Uterus (tissue), 4 donors: ENCODE measurements at regions of chr6 and their contacts with region 1.

Region 1: GRCh38 chr6:149834513-149835481 is 29.4 kb downstream of the LRP11 start:
- DNase-seq: peak; percentile 56 to 61
- H3K4me3 ChIP-seq: no peak overlapping the region
- H3K27ac ChIP-seq: no peak overlapping the region
- H3K4me1 ChIP-seq: no peaks in the 10 kb centered on the region
- H3K27me3 ChIP-seq: no peaks in the 10 kb centered on the region
- CTCF ChIP-seq: peak; percentile 85 to 95 (median 90)
- POLR2A ChIP-seq: no peak

Region 2: GRCh38 chr6:149701714-149702113 is 133.1 kb before region 1 on chr6:
- intact Hi-C with region 1: no loop called
- DNase-seq: no peak
- H3K4me3 ChIP-seq: no peak overlapping the region
- H3K27ac ChIP-seq: no peak overlapping the region
- H3K4me1 ChIP-seq: peaks cover 0 to 3% of the 10 kb centered on the region in 2 donors
- H3K27me3 ChIP-seq: no peaks in the 10 kb centered on the region
- CTCF ChIP-seq: no peak
- POLR2A ChIP-seq: no peak

Region 3: DNA sequence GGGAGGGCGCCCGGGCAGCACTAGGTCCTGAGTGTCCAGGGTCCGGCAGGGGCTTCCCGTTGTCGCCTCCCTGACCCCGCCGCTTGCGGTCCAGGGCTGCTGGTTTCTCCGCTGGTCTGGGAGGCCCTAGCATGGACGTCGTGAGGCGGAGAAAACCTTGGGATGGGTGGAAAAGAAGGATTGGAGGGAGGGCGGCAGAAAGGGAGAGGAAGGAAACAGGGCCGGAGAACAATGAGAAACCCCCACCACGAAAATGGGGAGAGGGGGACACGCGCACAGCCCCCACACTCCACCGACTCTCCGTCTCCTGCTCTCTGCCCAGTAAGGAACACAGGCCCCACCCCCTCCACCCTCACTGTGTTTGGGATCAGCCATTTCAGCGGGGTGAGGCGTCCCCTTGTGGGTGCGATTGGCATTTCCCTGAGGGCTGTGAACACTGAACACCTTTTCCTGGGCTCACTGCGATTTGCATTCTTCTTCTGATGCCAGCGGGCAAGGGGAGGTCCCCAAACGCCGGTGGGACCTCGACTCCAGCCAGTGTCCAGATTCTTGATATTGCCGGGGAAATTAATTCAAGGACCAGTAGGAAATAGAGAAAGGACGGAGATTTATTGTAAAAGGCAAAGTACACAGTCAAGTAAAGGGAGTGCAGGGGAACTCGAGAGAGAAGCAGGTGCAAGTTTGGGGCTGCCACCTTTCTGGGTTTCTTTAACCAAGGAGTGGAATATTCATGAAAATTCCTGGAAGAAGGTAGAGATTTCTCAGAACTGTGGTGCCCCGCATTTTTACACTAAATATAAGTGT is 91.4 kb after region 1 on chr6:
- intact Hi-C with region 1: loop called (anchors 5 kb)
- DNase-seq: peak; percentile 88 to 89
- H3K4me3 ChIP-seq: peak overlapping the region; percentile 36 to 39
- H3K27ac ChIP-seq: peak overlapping the region; percentile 16 to 56
- H3K4me1 ChIP-seq: no peaks in the 10 kb centered on the region
- H3K27me3 ChIP-seq: peaks cover 0 to 7% of the 10 kb centered on the region in 2 donors
- CTCF ChIP-seq: peak; percentile 93 to 98 (median 97)
- POLR2A ChIP-seq: peak in 1 of 2 donors; percentile 15